ENCODE measurements at regions of chr17 and their contacts with region 1.

Region 1: DNA sequence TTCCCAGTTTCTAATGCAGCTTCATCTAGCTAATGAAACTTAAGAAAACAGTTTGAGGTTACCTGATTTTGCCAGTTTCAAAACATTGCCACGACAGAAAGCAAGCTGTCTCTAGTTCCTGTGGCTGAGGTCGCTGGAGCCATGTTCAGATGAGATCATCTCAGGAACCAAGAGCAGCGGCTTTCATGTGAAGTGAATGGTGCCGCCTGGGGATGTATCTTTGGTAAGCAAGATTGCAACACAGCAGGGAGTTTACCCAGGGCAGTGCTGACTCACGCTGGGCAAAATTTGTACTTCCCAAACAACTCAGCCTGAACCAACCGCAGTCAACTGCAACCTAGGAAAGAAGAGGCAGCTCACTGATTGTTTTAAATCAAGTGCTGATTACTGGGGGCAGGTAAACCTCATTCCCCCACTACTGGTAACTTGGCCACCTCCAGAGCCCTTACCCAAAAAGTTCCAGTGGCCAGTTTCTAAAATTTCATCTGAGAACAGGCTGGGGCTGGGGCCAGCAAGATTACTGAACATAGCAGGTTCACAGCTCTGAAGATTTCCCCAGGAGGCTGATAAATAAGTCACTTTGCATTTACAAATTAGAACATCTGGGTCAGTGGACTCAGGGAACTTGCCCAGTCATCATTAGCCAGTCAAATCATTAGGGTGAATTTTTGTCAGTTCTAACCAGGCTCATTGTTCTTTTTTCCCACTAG is at the start of gene RFFL:
- DNase-seq: peak; percentile 94
- ATAC-seq: peak; percentile 98
- H3K4me3 Mint-ChIP-seq: peak within 1 kb of the TSS; percentile 12
- H3K27ac Mint-ChIP-seq: peak within 1 kb of the TSS; percentile 80
- H3K4me1 Mint-ChIP-seq: peaks cover 62% of the 10 kb centered on the region
- H3K27me3 Mint-ChIP-seq: no peaks in the 10 kb centered on the region
- total RNA-seq, gene RFFL: 19.2 to 22.9 TPM

Region 2: DNA sequence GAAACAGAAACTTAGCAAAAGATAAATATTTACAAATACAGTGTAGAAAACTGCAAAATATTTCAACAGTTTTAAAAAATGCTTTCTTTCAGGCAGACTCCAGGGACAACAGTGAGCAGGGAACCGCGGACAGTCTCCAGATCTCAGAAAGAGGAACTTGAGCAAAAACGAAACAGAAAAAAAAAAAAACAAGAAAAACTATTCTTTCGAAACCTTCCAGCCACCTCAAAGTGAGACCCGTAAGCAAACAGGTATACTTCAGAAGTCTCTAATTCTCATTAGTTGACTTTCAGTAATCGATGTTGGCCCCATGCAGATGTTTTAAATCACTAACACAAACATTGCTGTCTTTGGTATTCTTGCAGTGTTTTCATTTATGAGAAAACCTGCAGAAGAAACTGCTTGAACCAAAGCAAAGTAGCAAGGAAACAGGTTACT is 685.0 kb before region 1 on chr17:
- CTCF ChIA-PET with region 1: no interaction called
- POLR2A ChIA-PET with region 1: no interaction called
- intact Hi-C with region 1: loop called in 1 of 2 experiments (anchors 5 kb)
- DNase-seq: peak; percentile 65
- ATAC-seq: peak; percentile 63
- H3K4me3 Mint-ChIP-seq: no peak overlapping the region
- H3K27ac Mint-ChIP-seq: no peak overlapping the region
- H3K4me1 Mint-ChIP-seq: peaks cover 56% of the 10 kb centered on the region
- H3K27me3 Mint-ChIP-seq: peaks cover 17% of the 10 kb centered on the region

Region 3: DNA sequence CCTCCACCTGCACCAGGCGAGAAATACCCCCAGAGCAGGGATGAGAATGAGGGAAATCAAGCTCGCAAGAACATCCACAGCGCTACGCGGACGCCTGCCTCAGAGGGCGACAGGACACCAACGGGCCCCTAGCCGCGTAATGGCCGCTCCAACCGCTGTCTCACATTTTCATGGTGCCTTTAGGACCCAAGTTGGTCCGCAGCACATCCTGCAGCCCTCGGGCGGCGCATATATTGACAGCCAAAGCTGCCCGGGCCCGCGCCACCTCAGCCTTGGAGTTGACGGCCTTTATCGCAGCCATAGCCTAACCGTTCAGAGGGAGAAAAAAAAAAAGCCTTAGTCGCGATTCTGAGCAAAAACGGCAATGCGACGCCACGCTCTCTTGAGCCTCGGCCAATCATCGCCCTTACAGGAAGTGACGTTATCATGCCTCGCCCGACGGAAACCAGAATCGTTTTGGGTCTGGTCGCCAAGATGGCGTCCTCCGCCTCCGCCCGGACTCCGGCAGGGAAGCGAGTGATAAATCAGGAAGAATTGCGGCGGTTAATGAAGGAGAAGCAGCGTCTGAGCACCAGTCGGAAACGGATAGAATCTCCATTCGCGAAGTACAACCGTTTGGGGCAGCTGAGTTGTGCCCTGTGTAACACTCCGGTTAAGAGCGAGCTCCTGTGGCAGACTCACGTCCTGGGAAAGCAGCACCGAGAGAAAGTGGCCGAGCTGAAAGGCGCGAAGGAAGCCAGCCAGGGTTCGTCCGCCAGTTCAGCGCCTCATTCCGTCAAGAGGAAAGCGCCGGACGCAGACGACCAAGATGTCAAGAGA is 102.4 kb before region 1 on chr17 and contains the starts of genes CCT6B and ZNF830:
- CTCF ChIA-PET with region 1: no interaction called
- POLR2A ChIA-PET with region 1: interaction called, 3 read pairs
- intact Hi-C with region 1: loop called in 1 of 2 experiments (anchors 1 kb)
- DNase-seq: peak; percentile 95
- ATAC-seq: peak; percentile 91
- H3K4me3 Mint-ChIP-seq: peak within 1 kb of the TSS; percentile 99
- H3K27ac Mint-ChIP-seq: peak within 1 kb of the TSS; percentile 100
- H3K4me1 Mint-ChIP-seq: peaks cover 26% of the 10 kb centered on the region
- H3K27me3 Mint-ChIP-seq: no peaks in the 10 kb centered on the region
- total RNA-seq, gene CCT6B: 0.95 to 1.6 TPM
- total RNA-seq, gene ZNF830: 20.0 TPM

Region 4: DNA sequence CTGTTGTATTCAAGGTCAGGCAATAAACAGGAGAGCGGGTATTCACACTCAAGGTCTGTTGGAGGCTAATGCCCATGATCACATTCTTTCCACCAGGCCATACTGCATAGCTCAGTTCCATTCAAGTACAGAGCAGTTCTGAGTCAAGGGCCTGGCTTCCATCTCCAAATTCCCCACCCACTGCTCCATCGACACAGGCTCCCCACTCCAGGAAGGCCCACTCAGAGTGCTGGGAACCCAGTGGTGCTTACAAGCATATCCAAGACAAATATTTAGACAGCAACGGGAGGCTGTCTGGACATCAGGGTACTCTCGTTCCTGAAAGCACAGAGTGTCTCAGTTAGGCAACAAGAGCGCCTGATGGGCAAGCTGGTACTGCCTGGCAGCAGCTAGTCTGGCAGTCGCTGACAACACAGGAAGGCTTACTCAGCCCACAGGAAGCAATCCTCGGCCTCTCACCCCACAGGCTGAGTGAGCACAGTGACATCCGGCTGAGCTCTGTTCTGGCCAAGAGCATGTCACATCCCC is 41.1 kb before region 1 on chr17:
- CTCF ChIA-PET with region 1: interaction called, 16 read pairs
- POLR2A ChIA-PET with region 1: interaction called, 14 read pairs
- intact Hi-C with region 1: loop called (anchors 1 kb)
- DNase-seq: peak; percentile 89
- ATAC-seq: peak; percentile 100
- H3K4me3 Mint-ChIP-seq: peak overlapping the region; percentile 67
- H3K27ac Mint-ChIP-seq: peak overlapping the region; percentile 99
- H3K4me1 Mint-ChIP-seq: peaks cover 44% of the 10 kb centered on the region
- H3K27me3 Mint-ChIP-seq: no peaks in the 10 kb centered on the region

Region 5: GRCh38 chr17:35046740-35047283 is 16.9 kb before region 1 on chr17:
- CTCF ChIA-PET with region 1: interaction called, 16 read pairs
- POLR2A ChIA-PET with region 1: interaction called, 19 read pairs
- intact Hi-C with region 1: loop called (anchors 1 kb)
- DNase-seq: peak; percentile 78
- ATAC-seq: peak; percentile 95
- H3K4me3 Mint-ChIP-seq: peak overlapping the region; percentile 71
- H3K27ac Mint-ChIP-seq: peak overlapping the region; percentile 91
- H3K4me1 Mint-ChIP-seq: peaks cover 80% of the 10 kb centered on the region
- H3K27me3 Mint-ChIP-seq: no peaks in the 10 kb centered on the region

Region 6: DNA sequence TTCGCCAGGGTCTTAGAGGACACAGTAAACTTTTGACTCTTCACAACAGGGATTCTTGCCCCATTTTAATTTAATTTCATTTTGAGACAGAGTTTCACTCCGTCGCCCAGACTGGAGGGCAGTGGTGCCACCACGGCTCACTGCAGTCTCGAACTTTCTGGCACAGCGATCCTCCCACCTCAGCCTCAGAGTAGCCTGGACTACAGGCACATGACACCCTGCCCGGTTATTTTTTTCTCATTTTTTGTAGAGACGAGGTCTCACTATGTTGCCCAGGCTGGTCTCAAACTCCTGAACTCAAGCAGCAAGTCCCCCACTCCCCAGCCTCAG is 78.8 kb after region 1 on chr17:
- CTCF ChIA-PET with region 1: no interaction called
- POLR2A ChIA-PET with region 1: no interaction called
- intact Hi-C with region 1: no loop called
- DNase-seq: no peak
- ATAC-seq: peak; percentile 8
- H3K4me3 Mint-ChIP-seq: peak overlapping the region; percentile 80
- H3K27ac Mint-ChIP-seq: peak overlapping the region; percentile 51
- H3K4me1 Mint-ChIP-seq: peaks cover 14% of the 10 kb centered on the region
- H3K27me3 Mint-ChIP-seq: no peaks in the 10 kb centered on the region